PC-9 (cell line): ENCODE measurements at regions of chr18 and their contacts with region 1.

Region 1: GRCh38 chr18:67243799-67244587 is 272.5 kb downstream of the DSEL start:
- DNase-seq: no peak
- H3K4me3 ChIP-seq: no peak overlapping the region
- H3K27ac ChIP-seq: no peak overlapping the region
- H3K4me1 ChIP-seq: no peaks in the 10 kb centered on the region
- H3K27me3 ChIP-seq: no peaks in the 10 kb centered on the region
- CTCF ChIP-seq: no peak

Region 2: GRCh38 chr18:67318651-67319050 is 74.7 kb after region 1 on chr18:
- CTCF ChIA-PET with region 1: no interaction called
- POLR2A ChIA-PET with region 1: interaction called, 12 read pairs
- intact Hi-C with region 1: no loop called
- DNase-seq: no peak
- H3K4me3 ChIP-seq: no peak overlapping the region
- H3K27ac ChIP-seq: no peak overlapping the region
- H3K4me1 ChIP-seq: no peaks in the 10 kb centered on the region
- H3K27me3 ChIP-seq: no peaks in the 10 kb centered on the region
- CTCF ChIP-seq: no peak